Activated T-helper 1 cell treated with anti-CD3 and anti-CD28 coated beads, Interleukin-12 subunit alpha, Interleukin-12 subunit beta, Interleukin-2, Interleukin-4 antibody, amounts not matched to agents 30 ng/mL and 10 ng/mL and 1 ng/mL, durations not matched to agents 14 hours and 24 hours and 36 hours (primary cell): ENCODE measurements at regions of chr15 and their contacts with region 1.

Region 1: DNA sequence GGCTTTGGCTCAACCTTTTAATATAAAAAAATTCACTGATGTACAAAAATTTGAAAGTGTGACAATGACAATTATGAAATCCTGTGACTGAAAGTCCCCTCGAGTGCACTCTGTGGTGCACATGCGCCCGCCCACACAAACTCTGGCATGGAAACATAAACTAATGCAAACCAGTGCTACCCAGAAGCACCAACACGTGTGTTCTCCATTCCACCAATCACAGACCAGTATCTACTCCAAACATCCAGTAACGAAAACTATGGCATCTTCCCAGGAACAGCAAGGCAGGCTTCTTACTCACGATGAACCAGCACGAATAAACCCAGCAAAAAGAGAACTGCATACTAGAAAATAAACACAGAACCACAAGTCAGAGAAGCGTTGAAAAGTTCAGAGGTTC is 11.7 kb upstream of the NMB start:
- DNase-seq: no peak
- H3K4me3 Mint-ChIP-seq: peak overlapping the region; percentile 8
- H3K27ac Mint-ChIP-seq: peak overlapping the region; percentile 79
- H3K4me1 Mint-ChIP-seq: peaks cover 44% of the 10 kb centered on the region
- H3K27me3 Mint-ChIP-seq: no peaks in the 10 kb centered on the region

Region 2: GRCh38 chr15:84643838-84644237 is 25.9 kb before region 1 on chr15:
- intact Hi-C with region 1: no loop called
- DNase-seq: no peak
- H3K4me3 Mint-ChIP-seq: no peak overlapping the region
- H3K27ac Mint-ChIP-seq: no peak overlapping the region
- H3K4me1 Mint-ChIP-seq: peaks cover 11% of the 10 kb centered on the region
- H3K27me3 Mint-ChIP-seq: no peaks in the 10 kb centered on the region

Region 3: DNA sequence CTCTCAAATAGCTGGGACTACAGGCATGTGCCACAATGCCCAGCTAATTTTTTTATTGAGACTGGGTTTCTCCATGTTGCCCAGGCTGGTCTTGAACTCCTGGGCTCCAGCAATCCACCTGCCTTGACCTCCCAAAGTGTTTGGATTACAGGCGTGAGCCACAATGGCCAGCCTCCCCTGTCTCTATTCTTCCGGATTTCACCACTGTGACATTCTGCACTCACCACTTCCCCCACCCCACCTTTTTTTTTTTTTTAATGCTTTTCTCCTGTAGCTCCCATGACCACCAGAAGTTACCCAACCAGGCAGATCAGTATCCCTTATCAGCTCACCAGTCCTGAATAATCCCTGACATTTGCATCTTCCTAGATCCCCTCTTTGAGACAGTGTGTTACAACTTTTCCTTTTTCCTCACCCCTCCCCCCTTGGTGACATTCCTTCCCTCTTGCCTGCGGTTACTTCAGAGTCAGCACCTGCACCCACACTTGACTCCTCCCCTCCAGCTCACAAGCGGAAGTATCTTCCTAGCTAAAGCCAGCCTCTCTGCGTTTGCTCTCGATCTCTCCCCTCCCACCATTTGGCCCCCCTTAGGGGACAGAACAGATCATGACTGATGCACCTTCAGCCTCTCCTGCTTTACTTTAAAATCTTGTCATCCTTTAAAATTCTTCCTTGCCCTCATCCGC is 65.2 kb after region 1 on chr15:
- intact Hi-C with region 1: loop called (anchors 1 kb)
- DNase-seq: peak; percentile 67
- H3K4me3 Mint-ChIP-seq: peak overlapping the region; percentile 74
- H3K27ac Mint-ChIP-seq: peak overlapping the region; percentile 93
- H3K4me1 Mint-ChIP-seq: peaks cover 48% of the 10 kb centered on the region
- H3K27me3 Mint-ChIP-seq: no peaks in the 10 kb centered on the region